Naive thymus-derived CD4-positive, alpha-beta T cell (primary cell): ENCODE measurements at regions of chr10 and their contacts with region 1.

Region 1: DNA sequence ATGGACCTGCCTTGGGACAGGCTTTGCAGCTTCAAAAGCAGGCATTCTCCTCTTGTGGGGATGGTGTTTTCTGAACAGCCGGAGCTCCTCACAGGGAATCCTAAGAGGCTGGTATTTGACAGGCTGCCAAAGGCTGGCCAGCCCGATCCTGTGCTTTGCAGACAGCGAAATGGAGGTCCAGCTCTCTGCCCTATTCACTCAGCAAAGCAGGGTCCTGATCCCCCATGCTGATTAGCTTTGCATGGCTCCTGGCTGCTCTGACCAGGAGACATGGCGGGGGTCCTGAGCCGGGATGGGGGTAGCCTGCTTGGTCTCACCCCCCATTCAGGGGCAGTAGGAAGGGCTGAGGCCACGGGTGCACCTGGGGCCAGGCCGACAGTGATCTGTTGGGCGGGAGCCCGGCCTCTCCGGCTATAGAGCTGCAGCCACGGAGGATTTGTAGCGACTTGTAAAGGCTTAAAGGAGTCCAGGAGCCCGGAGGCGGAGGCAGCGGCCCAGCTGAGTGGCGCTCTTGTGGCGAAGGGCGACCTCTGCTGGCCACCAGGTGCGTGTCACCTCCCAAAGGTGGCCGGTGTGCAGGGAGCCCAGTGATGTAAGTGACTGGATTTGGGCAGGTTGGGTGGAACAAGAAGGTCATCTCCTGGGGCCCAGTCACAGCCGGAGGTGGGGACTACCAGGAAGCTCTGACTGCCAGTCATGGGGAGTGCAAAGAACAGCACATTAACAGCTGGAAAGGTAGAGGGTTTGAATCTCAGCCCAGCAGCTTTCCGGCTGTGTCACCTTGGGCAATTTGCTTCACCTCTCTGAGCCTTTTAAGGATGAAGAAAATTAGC is 126.5 kb downstream of the ZMIZ1 start:
- DNase-seq: peak; percentile 49 to 80 (median 74)
- ATAC-seq: peak; percentile 89
- H3K4me3 ChIP-seq: no peak overlapping the region
- H3K4me3 Mint-ChIP-seq: no peak overlapping the region
- H3K27ac ChIP-seq: no peak overlapping the region
- H3K27ac Mint-ChIP-seq: no peak overlapping the region
- H3K4me1 ChIP-seq: peaks cover 0 to 3% of the 10 kb centered on the region in 2 donors
- H3K4me1 Mint-ChIP-seq: peaks cover 0 to 10% (median 5%) of the 10 kb centered on the region in 7 donors
- H3K27me3 ChIP-seq: no peaks in the 10 kb centered on the region
- H3K27me3 Mint-ChIP-seq: no peaks in the 10 kb centered on the region

Region 2: DNA sequence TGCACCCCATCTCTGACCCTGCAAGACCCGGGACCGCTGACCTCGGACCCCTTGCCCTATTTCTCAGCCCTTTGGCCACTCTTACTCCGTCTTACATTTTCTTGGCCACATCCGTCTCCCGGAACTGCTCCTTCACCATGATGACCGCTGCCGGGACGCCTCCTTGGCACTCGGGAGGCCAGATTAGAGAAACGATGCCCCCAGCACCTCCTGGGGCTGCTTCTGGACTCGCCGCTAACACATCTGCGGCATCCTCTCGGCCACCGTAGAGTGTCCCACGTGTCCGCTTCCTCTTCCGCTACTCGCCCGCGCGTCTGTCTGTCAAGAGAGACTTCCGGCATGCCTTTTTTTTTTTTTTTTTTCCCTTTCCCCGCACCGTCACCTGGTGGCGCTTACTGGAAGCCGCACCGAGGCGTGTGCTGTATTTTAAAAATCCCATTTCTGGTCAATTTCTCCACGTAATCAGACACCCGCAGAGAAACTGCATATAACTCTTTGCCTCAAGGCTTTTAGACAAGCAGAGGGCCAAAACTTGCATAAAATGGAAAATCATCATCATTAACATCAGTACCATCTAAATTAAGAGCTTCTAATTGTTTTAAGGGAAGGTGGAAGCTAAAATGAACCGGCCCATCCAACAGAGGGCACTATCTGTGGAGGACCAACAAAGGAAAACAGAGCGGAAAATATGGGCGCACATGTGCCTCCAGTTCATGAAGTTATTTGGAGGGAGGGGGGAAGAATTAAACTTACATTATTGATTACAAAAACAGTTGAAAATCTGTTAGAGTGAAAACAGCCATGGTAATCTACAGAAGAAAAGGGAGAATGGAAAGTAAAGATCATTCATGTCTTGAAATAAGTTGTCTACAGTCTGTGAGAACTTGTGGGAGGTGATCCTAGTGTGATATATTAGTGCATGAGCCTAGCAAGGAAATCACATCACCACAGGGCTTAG is 1165.8 kb before region 1 on chr10 and contains the start of gene POLR3A:
- CTCF ChIA-PET with region 1: interaction called, 3 read pairs
- POLR2A ChIA-PET with region 1: no interaction called
- intact Hi-C with region 1: loop called in 1 of 2 experiments (anchors 1 kb)
- DNase-seq: peak; percentile 79 to 94 (median 90)
- ATAC-seq: peak; percentile 77
- H3K4me3 ChIP-seq: peak within 1 kb of the TSS; percentile 99
- H3K4me3 Mint-ChIP-seq: peak within 1 kb of the TSS; percentile 92 to 100 (median 99)
- H3K27ac ChIP-seq: peak within 1 kb of the TSS; percentile 89
- H3K27ac Mint-ChIP-seq: peak within 1 kb of the TSS; percentile 88 to 99 (median 95)
- H3K4me1 ChIP-seq: peaks cover 12 to 19% of the 10 kb centered on the region in 2 donors
- H3K4me1 Mint-ChIP-seq: peaks cover 22 to 50% (median 37%) of the 10 kb centered on the region in 7 donors
- H3K27me3 ChIP-seq: no peaks in the 10 kb centered on the region
- H3K27me3 Mint-ChIP-seq: no peaks in the 10 kb centered on the region
- total RNA-seq, gene POLR3A: 12.0 to 20.9 (median 19.0) TPM

Region 3: DNA sequence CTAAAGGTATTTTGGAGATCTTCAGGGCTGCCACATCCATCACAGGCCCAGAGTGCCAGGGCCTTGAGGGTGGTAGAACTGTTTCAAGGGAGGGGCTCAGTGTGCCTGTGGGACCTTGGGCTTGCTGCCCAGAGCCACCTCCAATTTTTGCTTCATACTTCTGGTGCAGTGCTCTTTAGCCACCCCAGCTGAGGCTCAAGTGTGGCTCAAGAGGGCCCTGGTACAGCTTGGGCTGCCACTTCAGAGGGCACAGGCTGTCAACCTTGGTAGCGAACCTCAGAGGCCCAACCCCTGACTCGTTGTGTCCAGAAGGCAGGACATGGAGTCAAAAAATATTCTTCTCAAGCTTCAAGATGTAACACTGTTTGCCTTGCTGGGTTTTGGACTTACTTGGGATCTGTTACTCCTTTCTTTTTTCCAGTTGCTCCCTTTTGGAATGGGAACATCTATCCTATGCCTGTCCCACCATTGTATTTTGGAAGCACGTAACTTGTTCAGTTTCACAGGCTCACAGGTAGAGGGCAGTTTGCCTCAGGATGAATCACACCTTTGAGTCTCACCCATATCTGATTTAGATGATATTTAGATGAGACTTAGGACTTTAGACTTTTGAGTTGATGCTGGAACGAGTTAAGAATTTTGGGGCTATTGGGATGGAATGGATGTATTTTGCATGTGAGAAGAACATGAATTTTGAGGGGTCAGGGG is 936.8 kb before region 1 on chr10:
- CTCF ChIA-PET with region 1: no interaction called
- POLR2A ChIA-PET with region 1: no interaction called
- intact Hi-C with region 1: loop called in 1 of 2 experiments (anchors 1 kb)
- DNase-seq: peak in 1 of 9 donors; percentile 12
- ATAC-seq: no peak
- H3K4me3 ChIP-seq: no peak overlapping the region
- H3K4me3 Mint-ChIP-seq: no peak overlapping the region
- H3K27ac ChIP-seq: no peak overlapping the region
- H3K27ac Mint-ChIP-seq: no peak overlapping the region
- H3K4me1 ChIP-seq: no peaks in the 10 kb centered on the region
- H3K4me1 Mint-ChIP-seq: peaks cover 0 to 5% (median 0%) of the 10 kb centered on the region in 7 donors
- H3K27me3 ChIP-seq: no peaks in the 10 kb centered on the region
- H3K27me3 Mint-ChIP-seq: peaks cover 0 to 3% (median 0%) of the 10 kb centered on the region in 5 donors

Region 4: DNA sequence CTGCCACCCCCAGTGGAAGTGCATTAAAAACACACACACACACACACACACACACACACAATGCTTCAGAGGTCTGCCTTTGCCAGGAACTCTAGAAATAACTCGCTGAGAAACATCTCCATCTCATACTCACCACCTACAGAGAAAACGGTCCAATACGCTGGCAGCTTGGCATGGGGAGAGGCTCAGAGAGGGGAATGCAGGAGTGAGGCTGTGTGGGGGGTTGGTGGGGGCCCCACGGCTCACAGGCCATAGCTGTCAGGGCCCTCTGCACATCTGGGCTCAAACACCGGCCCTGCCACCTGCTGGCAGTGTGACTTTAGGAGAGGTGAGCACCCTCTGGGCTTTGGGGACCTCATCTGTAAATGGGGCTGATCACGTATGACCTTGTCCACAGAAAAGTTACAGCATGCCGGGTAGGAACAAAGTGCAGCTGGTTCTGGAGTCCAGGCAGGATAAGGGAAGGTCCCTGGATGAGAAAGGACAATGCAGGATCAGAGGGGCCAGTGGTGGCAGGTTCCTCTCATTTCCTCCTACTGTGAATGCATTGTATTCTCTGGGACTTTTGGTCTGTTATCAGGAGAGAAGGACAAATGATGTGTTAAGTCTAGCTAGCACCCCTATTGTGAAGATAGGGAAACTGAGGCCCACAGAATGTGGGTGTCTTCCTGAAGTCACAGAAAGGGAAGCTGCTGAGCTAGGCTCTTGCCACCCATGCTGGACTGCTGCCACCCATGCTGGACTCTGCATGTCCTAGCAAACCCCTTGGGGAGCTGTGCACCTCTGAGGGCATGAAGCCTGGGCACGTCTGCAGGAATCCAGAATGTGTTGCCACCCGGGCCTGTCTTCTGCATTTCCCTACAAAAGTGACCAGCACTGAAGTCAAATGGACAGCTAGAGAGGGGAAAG is 757.1 kb before region 1 on chr10:
- CTCF ChIA-PET with region 1: no interaction called
- POLR2A ChIA-PET with region 1: no interaction called
- intact Hi-C with region 1: loop called in 1 of 2 experiments (anchors 5 kb)
- DNase-seq: peak in 3 of 9 donors; percentile 3 to 12 (median 6)
- ATAC-seq: no peak
- H3K4me3 ChIP-seq: no peak overlapping the region
- H3K4me3 Mint-ChIP-seq: peak overlapping the region in 1 of 10 donors; percentile 51
- H3K27ac ChIP-seq: no peak overlapping the region
- H3K27ac Mint-ChIP-seq: peak overlapping the region in 1 of 9 donors; percentile 12
- H3K4me1 ChIP-seq: no peaks in the 10 kb centered on the region
- H3K4me1 Mint-ChIP-seq: peaks cover 0 to 2% (median 0%) of the 10 kb centered on the region in 7 donors
- H3K27me3 ChIP-seq: no peaks in the 10 kb centered on the region
- H3K27me3 Mint-ChIP-seq: peaks cover 0 to 8% (median 4%) of the 10 kb centered on the region in 5 donors

Region 5: DNA sequence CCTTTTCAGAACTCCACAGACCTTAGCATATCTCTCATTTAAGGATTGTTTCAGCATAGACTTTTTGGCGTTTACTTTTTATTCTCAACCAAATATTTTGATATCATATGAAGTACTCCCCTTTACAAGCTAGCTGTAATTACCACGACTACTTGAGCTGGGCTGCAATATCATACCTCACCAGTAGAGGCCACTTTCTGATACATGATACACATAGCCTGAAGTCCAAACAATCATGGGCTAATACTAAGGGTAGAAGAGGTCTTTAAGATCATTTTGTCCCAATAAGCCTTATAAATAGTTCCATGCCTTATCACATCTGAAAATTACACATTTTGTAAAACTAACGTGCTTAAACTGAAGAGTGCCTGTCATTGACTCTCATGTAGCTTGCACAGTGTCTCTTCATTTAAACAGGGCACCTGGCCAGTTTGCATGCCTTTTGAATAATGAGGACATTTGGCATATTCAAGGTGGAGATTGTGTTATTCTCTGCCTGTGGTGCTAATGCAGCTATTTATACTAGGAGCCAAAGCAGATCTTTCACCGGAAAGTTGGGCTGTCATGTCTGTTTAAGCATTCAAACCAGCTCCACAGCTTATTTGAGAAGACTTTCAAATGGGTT is 530.3 kb before region 1 on chr10:
- CTCF ChIA-PET with region 1: interaction called, 8 read pairs
- POLR2A ChIA-PET with region 1: no interaction called
- intact Hi-C with region 1: loop called in 1 of 2 experiments (anchors 2 kb)
- DNase-seq: no peak
- ATAC-seq: no peak
- H3K4me3 ChIP-seq: no peak overlapping the region
- H3K4me3 Mint-ChIP-seq: no peak overlapping the region
- H3K27ac ChIP-seq: no peak overlapping the region
- H3K27ac Mint-ChIP-seq: no peak overlapping the region
- H3K4me1 ChIP-seq: no peaks in the 10 kb centered on the region
- H3K4me1 Mint-ChIP-seq: no peaks in the 10 kb centered on the region
- H3K27me3 ChIP-seq: no peaks in the 10 kb centered on the region
- H3K27me3 Mint-ChIP-seq: peaks cover 17 to 49% (median 23%) of the 10 kb centered on the region in 5 donors

Region 6: GRCh38 chr10:78944723-78945312 is 250.5 kb before region 1 on chr10:
- CTCF ChIA-PET with region 1: interaction called, 3 read pairs
- POLR2A ChIA-PET with region 1: no interaction called
- intact Hi-C with region 1: loop called in 1 of 2 experiments (anchors 5 kb)
- DNase-seq: peak in 5 of 9 donors; percentile 16 to 44 (median 36)
- ATAC-seq: peak; percentile 41
- H3K4me3 ChIP-seq: no peak overlapping the region
- H3K4me3 Mint-ChIP-seq: peak overlapping the region in 4 of 10 donors; percentile 12 to 31 (median 18)
- H3K27ac ChIP-seq: peak overlapping the region; percentile 29
- H3K27ac Mint-ChIP-seq: peak overlapping the region in 8 of 9 donors; percentile 44 to 95 (median 88)
- H3K4me1 ChIP-seq: peaks cover 0 to 10% of the 10 kb centered on the region in 2 donors
- H3K4me1 Mint-ChIP-seq: peaks cover 0 to 31% (median 25%) of the 10 kb centered on the region in 7 donors
- H3K27me3 ChIP-seq: no peaks in the 10 kb centered on the region
- H3K27me3 Mint-ChIP-seq: peaks cover 0 to 4% (median 0%) of the 10 kb centered on the region in 5 donors

Region 7: DNA sequence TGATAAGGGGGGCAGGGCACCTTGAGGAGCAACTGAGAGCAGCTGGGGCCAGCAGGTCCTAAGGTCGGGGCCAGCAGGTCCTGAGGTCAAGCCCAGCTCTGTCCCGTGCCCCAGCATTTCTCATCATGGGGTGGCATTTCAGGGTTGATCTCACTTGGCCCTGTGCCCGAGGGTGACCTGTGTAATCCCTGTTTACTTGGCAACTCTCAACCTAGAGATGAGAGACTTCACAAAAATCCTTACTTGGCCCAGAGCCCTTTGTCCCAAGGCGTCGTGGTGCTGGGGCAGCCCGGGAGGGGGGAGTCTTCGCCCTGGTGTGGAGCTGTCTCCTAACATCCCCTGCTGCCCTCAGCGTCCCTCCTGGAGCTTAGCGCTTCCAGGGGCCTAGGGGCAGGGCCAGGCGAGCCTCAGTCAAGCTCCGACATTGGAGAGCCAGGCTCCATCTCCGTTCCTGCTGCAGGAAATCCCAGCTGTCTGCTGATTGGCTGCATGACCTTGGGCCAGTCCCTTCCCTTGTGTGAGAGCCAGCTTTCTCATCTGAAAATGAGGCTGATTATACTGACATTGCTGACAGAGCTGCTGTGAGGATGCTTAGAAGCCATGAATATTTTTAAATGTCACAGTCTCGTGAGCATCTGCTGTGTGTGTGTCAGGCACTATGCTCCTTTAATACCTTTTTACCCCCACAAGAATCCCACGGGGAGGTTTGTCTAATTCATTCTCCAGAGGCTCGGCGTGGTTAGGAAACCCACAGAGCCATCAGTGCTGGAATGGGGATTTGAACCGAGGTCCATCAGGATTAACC is 32.2 kb before region 1 on chr10:
- CTCF ChIA-PET with region 1: no interaction called
- POLR2A ChIA-PET with region 1: no interaction called
- intact Hi-C with region 1: no loop called
- DNase-seq: no peak
- ATAC-seq: no peak
- H3K4me3 ChIP-seq: no peak overlapping the region
- H3K4me3 Mint-ChIP-seq: no peak overlapping the region
- H3K27ac ChIP-seq: no peak overlapping the region
- H3K27ac Mint-ChIP-seq: peak overlapping the region in 1 of 9 donors; percentile 49
- H3K4me1 ChIP-seq: no peaks in the 10 kb centered on the region
- H3K4me1 Mint-ChIP-seq: peaks cover 0 to 6% (median 3%) of the 10 kb centered on the region in 7 donors
- H3K27me3 ChIP-seq: no peaks in the 10 kb centered on the region
- H3K27me3 Mint-ChIP-seq: no peaks in the 10 kb centered on the region